ENCODE measurements at regions of chr3 and their contacts with region 1.

Region 1: DNA sequence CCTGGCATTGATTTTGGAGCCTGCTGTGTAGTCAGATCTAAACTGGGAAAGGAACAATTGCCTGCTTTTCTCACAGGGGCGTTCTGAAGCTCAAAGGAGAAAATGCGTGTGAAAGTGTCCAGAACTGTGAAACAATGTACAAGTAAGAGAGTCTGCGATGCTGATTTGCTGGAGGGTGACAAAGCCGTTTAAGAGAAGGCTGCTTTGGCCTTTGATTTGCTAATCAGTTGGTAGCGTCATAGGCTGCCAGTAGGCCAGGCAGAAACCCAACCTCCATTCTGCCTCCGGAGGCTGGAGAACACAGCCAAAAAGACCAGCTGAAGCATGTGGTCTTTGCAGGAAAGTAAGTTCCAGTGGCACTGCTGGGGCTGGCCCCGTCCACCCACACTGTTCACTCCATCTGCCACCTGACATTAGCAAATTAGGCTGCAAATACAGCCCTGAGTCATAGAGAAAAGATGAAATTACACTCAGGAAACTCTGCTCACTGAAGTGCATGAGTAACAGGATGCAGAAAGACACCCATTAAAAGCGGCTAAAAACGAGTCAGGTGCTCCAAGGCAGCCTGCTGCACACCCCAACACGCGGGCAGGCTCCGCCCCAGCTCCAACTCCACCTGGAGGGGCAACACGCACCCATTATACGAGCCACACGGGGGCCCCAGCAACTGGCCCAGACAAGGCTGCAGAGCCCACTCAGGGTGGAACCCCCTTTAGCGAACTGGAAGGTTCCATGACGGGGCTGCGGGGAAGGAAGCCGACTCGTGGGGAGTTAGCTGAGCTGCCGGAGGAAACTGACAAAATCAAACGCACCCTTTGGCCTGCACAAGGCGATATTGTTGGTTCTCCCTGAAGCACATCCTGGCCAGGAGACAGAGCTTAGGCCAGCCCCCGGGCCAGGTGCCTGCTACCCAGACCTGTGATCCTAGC is 31.6 kb downstream of the ZDHHC19 start:
- DNase-seq: peak; percentile 95
- ATAC-seq: peak; percentile 85
- H3K4me3 Mint-ChIP-seq: peak overlapping the region; percentile 47
- H3K27ac Mint-ChIP-seq: peak overlapping the region; percentile 95
- H3K4me1 Mint-ChIP-seq: peaks cover 60% of the 10 kb centered on the region
- H3K27me3 Mint-ChIP-seq: no peaks in the 10 kb centered on the region

Region 2: DNA sequence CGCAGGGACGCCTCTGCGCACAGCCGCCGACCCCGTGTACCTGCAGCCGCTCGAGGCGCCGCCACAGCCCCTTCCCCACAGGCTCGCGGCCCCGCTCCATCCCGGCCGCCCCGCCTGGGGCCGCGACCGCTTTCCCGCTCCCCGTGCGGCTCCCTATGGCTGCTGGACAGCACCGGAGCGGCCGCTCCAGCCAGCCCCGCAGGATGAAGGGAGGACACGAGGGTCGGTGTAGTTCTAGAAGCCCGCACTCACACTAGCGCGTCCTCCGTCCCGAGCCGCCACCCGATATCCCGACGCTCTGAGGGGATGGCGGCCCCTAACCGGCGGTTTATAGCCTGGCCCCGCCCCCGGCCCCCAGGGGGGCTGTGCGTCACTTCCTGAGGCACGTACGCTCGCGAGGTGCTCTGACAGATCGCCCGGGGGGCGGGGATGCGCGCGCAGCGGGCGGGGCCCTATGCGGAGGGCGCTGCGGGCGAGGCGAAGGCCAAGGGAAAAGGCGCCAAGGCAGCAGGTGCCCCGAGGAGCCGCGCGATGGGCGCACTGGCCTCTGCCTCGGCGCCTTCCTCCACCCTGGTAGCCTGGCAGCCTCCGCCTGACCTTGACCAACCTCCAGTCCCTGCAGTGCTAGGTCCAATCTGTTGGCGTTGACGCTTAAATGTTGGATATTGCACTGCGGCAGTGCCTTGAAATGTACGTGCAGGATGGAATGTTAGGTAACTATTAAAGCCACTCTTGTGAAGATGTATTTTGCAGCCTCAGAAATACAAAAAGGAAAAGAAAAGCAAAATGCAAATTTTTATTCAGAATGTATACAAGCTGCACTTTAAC is 97.6 kb before region 1 on chr3 and contains the start of gene TFRC:
- CTCF ChIA-PET with region 1: interaction called, 24 read pairs
- POLR2A ChIA-PET with region 1: interaction called, 27 read pairs
- DNase-seq: peak; percentile 96
- ATAC-seq: peak; percentile 88
- H3K4me3 Mint-ChIP-seq: peak within 1 kb of the TSS; percentile 94
- H3K27ac Mint-ChIP-seq: peak within 1 kb of the TSS; percentile 98
- H3K4me1 Mint-ChIP-seq: peaks cover 47% of the 10 kb centered on the region
- H3K27me3 Mint-ChIP-seq: no peaks in the 10 kb centered on the region
- total RNA-seq, gene TFRC: 282 to 298 TPM

Region 3: DNA sequence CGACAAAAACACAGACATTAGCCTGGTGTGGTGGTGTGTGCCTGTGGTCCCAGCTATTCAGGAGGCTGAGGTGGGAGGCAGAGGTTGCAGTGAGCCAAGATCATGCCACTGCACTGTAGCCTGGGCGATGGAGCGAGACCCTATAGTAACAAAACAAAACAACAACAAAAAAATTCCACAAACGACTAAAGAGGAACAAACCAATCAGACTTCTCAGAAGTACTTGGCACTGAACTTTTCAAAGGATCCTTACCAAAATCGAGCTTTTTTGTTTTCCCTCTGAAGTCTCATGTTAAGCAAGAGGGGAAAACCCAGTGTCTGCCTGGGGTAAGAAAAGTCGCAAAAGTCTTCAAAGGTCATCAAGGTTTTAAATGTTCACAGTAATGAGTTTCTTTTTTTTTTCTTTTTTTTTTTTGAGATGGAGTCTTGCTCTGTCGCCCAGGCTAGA is 67.7 kb before region 1 on chr3:
- CTCF ChIA-PET with region 1: interaction called, 6 read pairs
- POLR2A ChIA-PET with region 1: interaction called, 10 read pairs
- DNase-seq: no peak
- ATAC-seq: peak; percentile 74
- H3K4me3 Mint-ChIP-seq: no peak overlapping the region
- H3K27ac Mint-ChIP-seq: no peak overlapping the region
- H3K4me1 Mint-ChIP-seq: peaks cover 10% of the 10 kb centered on the region
- H3K27me3 Mint-ChIP-seq: no peaks in the 10 kb centered on the region

Region 4: DNA sequence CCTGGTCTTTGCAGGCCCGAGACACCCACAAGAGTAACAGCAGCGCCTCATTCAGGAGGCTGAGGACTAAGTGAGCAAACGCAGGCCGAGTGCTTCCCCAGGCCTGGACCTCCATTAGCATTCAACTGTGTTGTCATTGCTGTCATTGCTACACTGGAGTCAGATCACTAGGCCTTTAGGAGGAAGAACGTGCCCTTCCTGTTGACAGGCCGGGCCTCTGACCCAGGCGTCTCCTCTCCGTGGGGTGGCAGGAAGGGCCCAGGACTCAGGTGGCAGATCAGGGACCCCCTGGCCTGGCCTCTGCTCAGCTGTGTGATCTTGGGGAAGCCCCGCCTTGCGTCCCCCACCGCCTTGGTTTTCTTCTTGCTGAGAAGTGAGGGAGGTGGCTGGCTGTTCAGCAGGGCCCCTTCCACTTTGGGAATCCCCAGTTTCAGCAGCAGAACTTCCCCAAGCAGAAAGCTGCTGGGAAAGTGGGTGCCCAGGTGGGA is 12.4 kb after region 1 on chr3:
- CTCF ChIA-PET with region 1: interaction called, 66 read pairs
- POLR2A ChIA-PET with region 1: interaction called, 9 read pairs
- DNase-seq: peak; percentile 42
- ATAC-seq: peak; percentile 8
- H3K4me3 Mint-ChIP-seq: no peak overlapping the region
- H3K27ac Mint-ChIP-seq: peak overlapping the region; percentile 91
- H3K4me1 Mint-ChIP-seq: peaks cover 46% of the 10 kb centered on the region
- H3K27me3 Mint-ChIP-seq: no peaks in the 10 kb centered on the region